ENCODE measurements at regions of chr3 and their contacts with region 1.

Region 1: GRCh38 chr3:150721285-150722130 is 17.8 kb upstream of the ERICH6 start:
- DNase-seq: no peak
- ATAC-seq: peak; percentile 26 to 76
- H3K4me3 ChIP-seq: no peak overlapping the region
- H3K27ac ChIP-seq: no peak overlapping the region
- H3K4me1 ChIP-seq: no peaks in the 10 kb centered on the region
- H3K27me3 ChIP-seq: no peaks in the 10 kb centered on the region

Region 2: GRCh38 chr3:150751753-150752263 is 30.3 kb after region 1 on chr3:
- intact Hi-C with region 1: no loop called
- DNase-seq: no peak
- ATAC-seq: peak; percentile 18 to 23
- H3K4me3 ChIP-seq: no peak overlapping the region
- H3K27ac ChIP-seq: no peak overlapping the region
- H3K4me1 ChIP-seq: peaks cover 20% of the 10 kb centered on the region
- H3K27me3 ChIP-seq: no peaks in the 10 kb centered on the region

Region 3: GRCh38 chr3:150787741-150788370 is 66.3 kb after region 1 on chr3:
- intact Hi-C with region 1: loop called in 1 of 4 experiments (anchors 10 kb)
- DNase-seq: peak; percentile 87 to 95 (median 93)
- ATAC-seq: peak; percentile 88 to 90
- H3K4me3 ChIP-seq: no peak overlapping the region
- H3K27ac ChIP-seq: no peak overlapping the region
- H3K4me1 ChIP-seq: no peaks in the 10 kb centered on the region
- H3K27me3 ChIP-seq: no peaks in the 10 kb centered on the region

Region 4: GRCh38 chr3:150861851-150862250 is 140.3 kb after region 1 on chr3:
- intact Hi-C with region 1: loop called (anchors 2 to 5 kb)
- DNase-seq: no peak
- ATAC-seq: no peak
- H3K4me3 ChIP-seq: no peak overlapping the region
- H3K27ac ChIP-seq: no peak overlapping the region
- H3K4me1 ChIP-seq: no peaks in the 10 kb centered on the region
- H3K27me3 ChIP-seq: no peaks in the 10 kb centered on the region

Region 5: DNA sequence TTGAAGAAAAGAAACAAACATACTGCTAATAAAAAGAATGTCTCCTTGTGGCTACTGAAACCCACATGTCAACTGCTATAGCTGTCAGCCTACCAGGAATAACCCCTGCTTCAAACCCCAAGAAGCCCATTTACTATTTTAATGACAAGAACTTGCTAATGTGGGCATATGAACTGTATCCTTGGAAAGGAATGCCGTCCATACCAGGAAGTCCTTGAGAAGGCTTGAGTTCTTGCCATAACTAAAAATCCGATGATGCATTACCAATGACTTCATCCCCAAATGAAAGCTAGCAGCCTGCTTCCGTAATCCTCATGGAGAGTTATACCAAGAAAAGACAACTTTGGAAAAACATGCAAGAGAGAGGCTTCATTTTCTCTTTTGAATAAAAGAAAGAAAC is 148.9 kb after region 1 on chr3:
- intact Hi-C with region 1: loop called in 3 of 4 experiments (anchors 2 to 5 kb)
- DNase-seq: no peak
- ATAC-seq: no peak
- H3K4me3 ChIP-seq: no peak overlapping the region
- H3K27ac ChIP-seq: no peak overlapping the region
- H3K4me1 ChIP-seq: no peaks in the 10 kb centered on the region
- H3K27me3 ChIP-seq: no peaks in the 10 kb centered on the region

Region 6: GRCh38 chr3:151146071-151146730 is 424.7 kb after region 1 on chr3:
- intact Hi-C with region 1: loop called in 3 of 4 experiments (anchors 5 to 10 kb)
- DNase-seq: peak; percentile 66 to 79 (median 67)
- ATAC-seq: peak; percentile 92 to 96
- H3K4me3 ChIP-seq: no peak overlapping the region
- H3K27ac ChIP-seq: no peak overlapping the region
- H3K4me1 ChIP-seq: peaks cover 2% of the 10 kb centered on the region
- H3K27me3 ChIP-seq: no peaks in the 10 kb centered on the region